ENCODE measurements at regions of chr10 and their contacts with region 1.

Region 1: GRCh38 chr10:14543046-14543903 is 212.6 kb upstream of the FRMD4A start:
- DNase-seq: no peak
- H3K4me3 Mint-ChIP-seq: peak overlapping the region; percentile 8
- H3K27ac Mint-ChIP-seq: peak overlapping the region; percentile 58
- H3K4me1 Mint-ChIP-seq: peaks cover 84% of the 10 kb centered on the region
- H3K27me3 Mint-ChIP-seq: no peaks in the 10 kb centered on the region

Region 2: GRCh38 chr10:14560274-14560673 is 17.0 kb after region 1 on chr10:
- intact Hi-C with region 1: loop called (anchors 2 kb)
- DNase-seq: peak; percentile 59
- H3K4me3 Mint-ChIP-seq: peak overlapping the region; percentile 41
- H3K27ac Mint-ChIP-seq: peak overlapping the region; percentile 95
- H3K4me1 Mint-ChIP-seq: peaks cover 97% of the 10 kb centered on the region
- H3K27me3 Mint-ChIP-seq: no peaks in the 10 kb centered on the region